SK-N-SH (cell line): ENCODE measurements at regions of chr11 and their contacts with region 1.

Region 1: GRCh38 chr11:12281571-12282478 is 95.5 kb upstream of the PARVA start:
- DNase-seq: peak; percentile 89
- H3K4me3 ChIP-seq: no peak overlapping the region
- H3K27ac ChIP-seq: peak overlapping the region in 1 of 2 experiments; percentile 100; a peak in 2 of 4 replicates
- H3K4me1 ChIP-seq: peaks cover 14 to 36% of the 10 kb centered on the region in 2 experiments
- H3K27me3 ChIP-seq: no peaks in the 10 kb centered on the region
- CTCF ChIP-seq: peak; percentile 96
- EP300 ChIP-seq: no peak
- RAD21 ChIP-seq: peak; percentile 100

Region 2: DNA sequence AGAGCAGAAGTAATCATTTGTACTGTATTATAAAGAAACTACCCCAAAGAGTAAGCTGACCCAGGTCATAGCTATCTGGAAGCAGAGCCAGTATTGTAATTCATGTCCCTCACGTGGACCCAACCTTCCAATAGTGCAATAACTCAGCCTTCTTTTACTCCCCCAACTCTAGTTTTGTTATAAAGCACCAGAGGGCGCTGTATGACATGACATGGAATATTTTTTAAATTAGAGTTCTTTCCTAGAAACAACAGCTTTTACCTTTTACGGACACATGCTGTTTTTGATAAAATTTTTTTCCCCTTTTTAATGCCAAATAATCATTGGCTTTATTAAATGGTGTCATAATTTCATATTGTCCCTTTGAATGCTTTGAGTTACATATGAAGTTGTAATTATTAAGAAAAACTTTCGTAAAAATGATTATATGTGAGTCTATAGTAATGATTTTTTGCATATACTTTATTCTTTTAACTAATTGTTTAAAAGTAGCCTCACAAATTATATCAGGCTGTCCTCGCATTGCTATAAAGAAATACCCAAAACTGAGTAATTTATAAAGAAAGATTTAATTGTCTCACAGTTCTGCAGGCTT is 350.3 kb before region 1 on chr11:
- CTCF ChIA-PET with region 1: interaction called, 21 read pairs
- POLR2A ChIA-PET with region 1: no interaction called
- DNase-seq: peak; percentile 47
- H3K4me3 ChIP-seq: no peak overlapping the region
- H3K27ac ChIP-seq: 0 out of 4 replicates have a peak overlapping the region, but pooled peaks of 1 of the 2 experiments have one; percentile 16
- H3K4me1 ChIP-seq: no peaks in the 10 kb centered on the region; a peak in 1 of 4 replicates
- H3K27me3 ChIP-seq: no peaks in the 10 kb centered on the region
- CTCF ChIP-seq: peak; percentile 82
- EP300 ChIP-seq: no peak
- RAD21 ChIP-seq: peak; percentile 89

Region 3: GRCh38 chr11:12090061-12090591 is 191.7 kb before region 1 on chr11:
- CTCF ChIA-PET with region 1: interaction called, 10 read pairs
- POLR2A ChIA-PET with region 1: no interaction called
- DNase-seq: no peak
- H3K4me3 ChIP-seq: no peak overlapping the region
- H3K27ac ChIP-seq: peak overlapping the region; percentile 51 to 100; a peak in 3 of 4 replicates
- H3K4me1 ChIP-seq: peaks cover 6 to 50% of the 10 kb centered on the region in 2 experiments; a peak in 3 of 4 replicates
- H3K27me3 ChIP-seq: no peaks in the 10 kb centered on the region
- CTCF ChIP-seq: no peak
- EP300 ChIP-seq: peak in 1 of 2 experiments; percentile 86; a peak in 2 of 4 replicates
- RAD21 ChIP-seq: no peak

Region 4: GRCh38 chr11:12248338-12248737 is 33.5 kb before region 1 on chr11:
- CTCF ChIA-PET with region 1: interaction called, 21 read pairs
- POLR2A ChIA-PET with region 1: no interaction called
- DNase-seq: peak; percentile 59
- H3K4me3 ChIP-seq: no peak overlapping the region
- H3K27ac ChIP-seq: no peak overlapping the region
- H3K4me1 ChIP-seq: peaks cover 0 to 45% of the 10 kb centered on the region in 2 experiments; a peak in 1 of 4 replicates
- H3K27me3 ChIP-seq: no peaks in the 10 kb centered on the region
- CTCF ChIP-seq: no peak
- EP300 ChIP-seq: no peak
- RAD21 ChIP-seq: no peak

Region 5: DNA sequence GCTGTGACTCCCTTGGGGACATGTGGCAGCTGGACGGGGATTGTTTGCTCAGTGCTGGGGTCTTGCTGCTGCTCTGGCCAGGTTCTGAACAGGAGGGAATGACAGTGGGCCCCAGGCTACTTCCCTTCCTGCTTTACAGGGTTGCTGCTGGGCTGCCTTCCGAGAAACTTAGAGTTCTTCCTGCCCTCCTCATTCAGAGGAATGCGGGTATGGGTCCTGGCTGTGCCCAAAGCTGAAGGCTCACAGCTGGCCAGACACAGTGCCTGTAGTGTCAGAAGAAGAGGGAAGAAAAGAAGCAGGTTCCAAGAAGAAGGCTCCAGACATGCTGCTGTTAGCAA is 12.8 kb before region 1 on chr11:
- CTCF ChIA-PET with region 1: interaction called, 57 read pairs
- POLR2A ChIA-PET with region 1: no interaction called
- DNase-seq: peak; percentile 67
- H3K4me3 ChIP-seq: no peak overlapping the region
- H3K27ac ChIP-seq: peak overlapping the region; percentile 2 to 74
- H3K4me1 ChIP-seq: peaks cover 11 to 24% of the 10 kb centered on the region in 2 experiments; a peak in 3 of 4 replicates
- H3K27me3 ChIP-seq: no peaks in the 10 kb centered on the region
- CTCF ChIP-seq: no peak
- EP300 ChIP-seq: no peak
- RAD21 ChIP-seq: no peak

Region 6: GRCh38 chr11:12485328-12485727 is 203.5 kb after region 1 on chr11:
- CTCF ChIA-PET with region 1: no interaction called
- POLR2A ChIA-PET with region 1: no interaction called
- DNase-seq: no peak
- H3K4me3 ChIP-seq: no peak overlapping the region
- H3K27ac ChIP-seq: no peak overlapping the region
- H3K4me1 ChIP-seq: peaks cover 0 to 5% of the 10 kb centered on the region in 2 experiments; a peak in 1 of 4 replicates
- H3K27me3 ChIP-seq: no peaks in the 10 kb centered on the region
- CTCF ChIP-seq: peak; percentile 60
- EP300 ChIP-seq: no peak
- RAD21 ChIP-seq: peak; percentile 44; the same call in 1 of the 2 replicates